ENCODE measurements at regions of chr7 and their contacts with region 1.

Region 1: DNA sequence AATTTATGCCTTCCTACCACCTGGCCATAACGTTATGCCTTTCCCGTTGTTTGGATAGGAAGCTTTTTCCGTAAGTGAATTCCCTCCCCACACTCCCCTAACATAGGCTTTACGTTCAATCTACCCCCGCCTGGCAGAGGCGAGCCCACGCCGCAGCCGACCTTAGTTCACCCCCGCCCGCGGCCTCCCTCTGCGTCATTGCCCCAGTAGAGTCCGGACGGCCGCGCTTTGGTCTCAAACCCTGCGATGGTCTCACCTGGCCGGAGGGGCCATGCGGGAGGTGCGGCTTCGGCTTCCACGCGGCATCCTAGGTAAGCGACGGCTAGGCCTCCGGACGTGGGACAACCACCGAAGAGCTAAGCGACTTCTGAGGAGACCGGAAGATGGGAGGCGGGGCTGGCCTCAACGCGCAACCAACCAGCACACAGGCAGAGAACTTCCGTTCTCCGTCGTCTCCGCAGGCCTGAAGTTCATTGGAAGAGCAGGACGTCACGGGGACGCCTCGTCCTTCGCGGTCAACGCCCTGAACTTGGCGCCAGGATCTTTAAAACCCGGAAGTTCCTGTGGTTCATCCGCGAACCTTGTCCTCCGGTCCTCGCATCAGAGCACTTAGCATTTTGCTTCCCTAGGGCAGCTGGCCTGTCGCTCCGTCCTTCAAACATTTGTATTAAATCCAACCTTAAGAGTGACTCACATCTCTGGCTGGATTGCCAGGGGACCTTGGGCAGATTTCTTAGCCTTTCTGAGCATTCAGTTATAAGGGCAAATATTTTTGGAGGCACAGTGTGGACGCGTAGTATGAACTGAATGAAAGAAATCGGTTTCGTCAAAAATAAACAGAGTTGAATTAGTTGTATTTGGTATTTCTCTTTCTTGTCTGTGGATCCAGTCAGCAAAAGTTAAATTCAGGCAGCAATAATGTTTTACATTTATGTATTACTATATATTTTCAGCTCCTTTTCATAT is at the start of gene CHCHD2:
- DNase-seq: peak; percentile 97
- H3K4me3 Mint-ChIP-seq: peak within 1 kb of the TSS; percentile 97
- H3K27ac Mint-ChIP-seq: peak within 1 kb of the TSS; percentile 94
- H3K4me1 Mint-ChIP-seq: peaks cover 30% of the 10 kb centered on the region
- H3K27me3 Mint-ChIP-seq: no peaks in the 10 kb centered on the region
- total RNA-seq, gene CHCHD2: 764 to 766 TPM

Region 2: GRCh38 chr7:55951637-55952351 is 154.6 kb before region 1 on chr7 and contains the start of gene MRPS17:
- CTCF ChIA-PET with region 1: interaction called, 3 read pairs
- POLR2A ChIA-PET with region 1: no interaction called
- intact Hi-C with region 1: loop called (anchors 1 kb)
- DNase-seq: peak; percentile 96
- H3K4me3 Mint-ChIP-seq: peak within 1 kb of the TSS; percentile 86
- H3K27ac Mint-ChIP-seq: peak within 1 kb of the TSS; percentile 85
- H3K4me1 Mint-ChIP-seq: peaks cover 20% of the 10 kb centered on the region
- H3K27me3 Mint-ChIP-seq: peaks cover 3% of the 10 kb centered on the region
- total RNA-seq, gene MRPS17: 21.7 to 22.3 TPM

Region 3: GRCh38 chr7:56063882-56064625 is 42.3 kb before region 1 on chr7 and contains the start of gene SUMF2:
- CTCF ChIA-PET with region 1: no interaction called
- POLR2A ChIA-PET with region 1: interaction called, 5 read pairs
- intact Hi-C with region 1: loop called (anchors 1 kb)
- DNase-seq: peak; percentile 92
- H3K4me3 Mint-ChIP-seq: peak within 1 kb of the TSS; percentile 87
- H3K27ac Mint-ChIP-seq: peak within 1 kb of the TSS; percentile 86
- H3K4me1 Mint-ChIP-seq: peaks cover 40% of the 10 kb centered on the region
- H3K27me3 Mint-ChIP-seq: peaks cover 1% of the 10 kb centered on the region
- total RNA-seq, gene SUMF2: 130 to 133 TPM

Region 4: GRCh38 chr7:56229631-56230030 is 123.2 kb after region 1 on chr7:
- CTCF ChIA-PET with region 1: no interaction called
- POLR2A ChIA-PET with region 1: no interaction called
- intact Hi-C with region 1: no loop called
- DNase-seq: no peak
- H3K4me3 Mint-ChIP-seq: no peak overlapping the region
- H3K27ac Mint-ChIP-seq: no peak overlapping the region
- H3K4me1 Mint-ChIP-seq: no peaks in the 10 kb centered on the region
- H3K27me3 Mint-ChIP-seq: no peaks in the 10 kb centered on the region

Measured in activated CD4-positive, alpha-beta memory T cell treated with anti-CD3 and anti-CD28 coated beads for 36 hours (primary cell).